Activated CD8-positive, alpha-beta T cell treated with anti-CD3 and anti-CD28 coated beads for 36 hours (primary cell): ENCODE measurements at regions of chr13 and their contacts with region 1.

Region 1: DNA sequence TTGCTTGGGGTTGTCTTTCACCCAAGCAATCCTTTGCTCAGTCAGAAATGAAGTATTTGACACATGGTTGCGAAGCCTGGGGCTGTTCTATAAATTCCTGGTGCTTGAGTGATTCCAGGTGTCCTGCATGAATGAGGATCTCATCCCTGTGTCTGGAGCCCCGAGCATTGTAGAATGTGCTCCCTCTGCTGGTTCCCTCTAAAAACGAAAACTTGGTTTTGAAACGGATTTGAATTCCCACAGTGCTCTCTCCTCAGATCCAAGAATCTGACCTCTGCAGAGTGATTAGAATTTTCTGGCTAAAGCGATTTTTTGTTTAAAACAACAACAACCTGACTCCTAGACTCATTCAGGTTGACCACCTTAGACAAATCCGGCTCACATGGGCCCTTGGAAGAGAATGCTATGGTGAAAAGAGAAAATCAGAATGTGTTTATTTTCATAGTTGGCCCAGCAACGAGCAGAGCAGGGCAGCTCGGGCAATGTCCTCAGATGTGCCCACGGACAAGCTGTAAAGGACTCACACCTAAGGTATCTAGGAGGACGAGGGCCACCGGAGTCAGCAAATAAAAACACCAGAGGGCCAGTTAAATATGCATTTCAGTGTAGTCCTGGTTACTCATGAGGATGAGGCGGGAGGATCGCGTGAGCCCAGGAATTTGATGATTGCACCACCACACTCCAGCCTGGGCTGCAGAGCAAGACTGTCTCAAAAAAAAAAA is 8.7 kb upstream of the ATP12A start:
- DNase-seq: no peak
- ATAC-seq: peak; percentile 34
- H3K4me3 Mint-ChIP-seq: no peak overlapping the region
- H3K27ac Mint-ChIP-seq: no peak overlapping the region
- H3K4me1 Mint-ChIP-seq: peaks cover 14% of the 10 kb centered on the region
- H3K27me3 Mint-ChIP-seq: peaks cover 17% of the 10 kb centered on the region
- CTCF ChIP-seq: peak; percentile 86

Region 2: GRCh38 chr13:24574847-24575246 is 96.7 kb before region 1 on chr13:
- CTCF ChIA-PET with region 1: interaction called, 19 read pairs
- POLR2A ChIA-PET with region 1: no interaction called
- intact Hi-C with region 1: loop called (anchors 5 kb)
- DNase-seq: no peak
- ATAC-seq: peak; percentile 45
- H3K4me3 Mint-ChIP-seq: no peak overlapping the region
- H3K27ac Mint-ChIP-seq: no peak overlapping the region
- H3K4me1 Mint-ChIP-seq: peaks cover 11% of the 10 kb centered on the region
- H3K27me3 Mint-ChIP-seq: peaks cover 6% of the 10 kb centered on the region
- CTCF ChIP-seq: no peak

Region 3: GRCh38 chr13:24605923-24606372 is 65.6 kb before region 1 on chr13:
- CTCF ChIA-PET with region 1: interaction called, 20 read pairs
- POLR2A ChIA-PET with region 1: interaction called, 3 read pairs
- intact Hi-C with region 1: loop called (anchors 5 kb)
- DNase-seq: no peak
- ATAC-seq: peak; percentile 76
- H3K4me3 Mint-ChIP-seq: no peak overlapping the region
- H3K27ac Mint-ChIP-seq: peak overlapping the region; percentile 41
- H3K4me1 Mint-ChIP-seq: peaks cover 32% of the 10 kb centered on the region
- H3K27me3 Mint-ChIP-seq: no peaks in the 10 kb centered on the region
- CTCF ChIP-seq: peak; percentile 45

Region 4: DNA sequence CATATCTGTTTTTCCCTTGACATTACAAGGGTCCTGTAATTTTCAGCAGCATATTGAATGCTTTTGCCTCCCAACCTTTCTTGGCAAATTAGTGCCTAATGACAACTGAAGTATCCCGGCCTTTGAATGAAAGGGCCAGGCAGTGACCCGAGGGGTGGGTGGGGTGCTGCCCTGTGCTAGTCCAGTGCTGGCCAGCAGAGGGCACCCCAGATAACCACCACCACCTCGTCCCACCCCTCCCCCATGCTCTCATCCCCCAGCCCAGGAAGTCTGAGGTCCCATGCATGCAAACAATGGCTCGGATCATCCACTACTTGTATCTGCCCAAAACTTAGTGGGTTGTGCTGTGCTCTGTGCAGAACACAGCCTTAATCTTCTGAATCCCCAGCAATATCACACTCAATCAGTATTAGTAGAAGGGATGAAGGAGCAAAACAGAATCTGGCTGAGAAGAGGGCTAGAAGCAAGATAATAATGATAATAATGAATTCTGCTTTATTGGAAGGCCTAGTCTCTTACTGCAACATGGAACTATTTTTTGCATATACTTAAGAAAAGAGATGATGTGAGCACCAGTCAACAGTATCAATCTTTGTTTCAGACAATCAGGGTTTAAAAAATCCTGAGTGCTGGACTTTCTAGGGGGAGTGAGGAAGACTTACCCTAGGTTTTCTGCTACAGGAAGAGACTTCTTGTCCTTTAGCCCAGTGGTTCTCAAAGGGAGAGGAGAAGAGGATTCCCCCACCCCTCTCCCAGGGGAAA is 12.5 kb after region 1 on chr13:
- CTCF ChIA-PET with region 1: interaction called, 22 read pairs
- POLR2A ChIA-PET with region 1: no interaction called
- intact Hi-C with region 1: no loop called
- DNase-seq: peak; percentile 80
- ATAC-seq: peak; percentile 82
- H3K4me3 Mint-ChIP-seq: no peak overlapping the region
- H3K27ac Mint-ChIP-seq: no peak overlapping the region
- H3K4me1 Mint-ChIP-seq: peaks cover 37% of the 10 kb centered on the region
- H3K27me3 Mint-ChIP-seq: peaks cover 38% of the 10 kb centered on the region
- CTCF ChIP-seq: peak; percentile 98